Activated CD8-positive, alpha-beta memory T cell treated with anti-CD3 and anti-CD28 coated beads, Interleukin-2, amount 10 ng/mL, durations not matched to agents 7 days and 5 days (primary cell): ENCODE measurements at regions of chr12 and their contacts with region 1.

Region 1: DNA sequence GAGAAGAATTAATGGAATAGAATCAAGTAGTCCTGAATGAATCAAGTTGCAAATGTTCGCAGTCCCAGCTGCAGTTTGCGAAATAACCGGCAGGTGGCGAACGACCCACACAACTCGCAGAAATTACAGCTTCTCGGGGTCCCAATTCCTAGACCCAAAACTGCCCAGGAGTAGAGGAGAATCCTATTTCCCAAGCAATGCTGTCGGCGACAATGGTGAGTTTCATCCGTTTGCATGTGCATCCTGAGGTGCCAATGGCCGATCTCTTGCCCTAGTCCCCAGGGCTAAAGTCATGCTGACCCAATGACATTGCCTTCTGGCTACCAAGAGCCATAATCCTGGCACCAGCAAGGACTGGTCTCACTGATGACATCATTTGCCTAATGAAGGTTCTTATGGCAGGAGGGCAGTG is 8.5 kb upstream of the ASCL1 start:
- DNase-seq: peak; percentile 56
- ATAC-seq: no peak
- H3K4me3 Mint-ChIP-seq: no peak overlapping the region
- H3K27ac Mint-ChIP-seq: no peak overlapping the region
- H3K4me1 Mint-ChIP-seq: peaks cover 8% of the 10 kb centered on the region
- H3K27me3 Mint-ChIP-seq: peaks cover 63% of the 10 kb centered on the region

Region 2: GRCh38 chr12:102976609-102977280 is 27.8 kb after region 1 on chr12:
- CTCF ChIA-PET with region 1: interaction called, 12 read pairs
- DNase-seq: no peak
- ATAC-seq: no peak
- H3K4me3 Mint-ChIP-seq: no peak overlapping the region
- H3K27ac Mint-ChIP-seq: no peak overlapping the region
- H3K4me1 Mint-ChIP-seq: no peaks in the 10 kb centered on the region
- H3K27me3 Mint-ChIP-seq: peaks cover 7% of the 10 kb centered on the region